Activated CD4-positive, alpha-beta T cell treated with anti-CD3 and anti-CD28 coated beads for 36 hours (primary cell): ENCODE measurements at regions of chr6 and their contacts with region 1.

Region 1: DNA sequence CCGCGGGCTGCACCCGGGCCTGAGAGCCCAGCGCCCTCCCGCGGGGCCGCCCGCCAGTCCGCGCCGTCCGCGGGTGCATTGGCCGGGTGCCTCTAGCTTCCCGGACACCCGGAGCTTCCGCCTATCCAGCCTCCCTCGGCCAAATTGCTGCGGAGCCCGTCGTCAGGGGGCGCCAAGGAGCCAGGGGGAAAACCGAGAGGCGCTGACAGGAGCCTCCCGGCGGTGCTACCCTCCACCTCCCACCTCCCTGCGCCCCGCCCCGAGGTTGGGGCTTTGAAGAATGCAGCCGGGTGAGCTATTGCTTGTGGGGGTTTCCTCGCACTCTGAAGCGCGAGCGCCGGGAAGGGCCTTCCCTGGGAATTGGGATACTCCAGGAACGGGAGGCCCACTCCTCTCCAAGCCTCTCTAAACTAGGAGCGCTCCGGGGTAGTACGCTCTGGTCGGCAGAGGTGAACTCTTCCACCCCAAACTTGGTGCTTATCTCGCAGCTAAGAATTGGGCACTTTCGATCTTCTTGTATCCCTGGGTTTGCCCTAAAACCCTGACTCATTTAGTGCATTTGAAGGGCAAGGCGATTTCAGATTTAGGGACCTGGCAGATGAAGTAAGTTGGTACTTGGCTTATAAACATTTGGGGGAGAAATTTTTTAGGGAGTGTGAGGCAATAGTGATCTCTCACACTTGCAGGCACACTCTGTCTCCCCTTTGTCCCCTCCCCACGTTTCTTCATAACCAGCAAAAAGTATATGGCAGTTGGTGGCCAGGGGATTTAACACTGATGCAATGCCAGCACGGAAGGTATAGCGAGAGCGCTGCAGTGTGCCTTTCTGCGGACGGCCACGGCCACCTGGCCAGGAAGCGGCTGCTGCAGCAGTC is 501 bp downstream of the BEND6 start:
- DNase-seq: peak; percentile 84
- ATAC-seq: peak; percentile 71
- H3K4me3 Mint-ChIP-seq: peak overlapping the region; percentile 59
- H3K27ac Mint-ChIP-seq: no peak overlapping the region
- H3K4me1 Mint-ChIP-seq: peaks cover 20% of the 10 kb centered on the region
- H3K27me3 Mint-ChIP-seq: peaks cover 56% of the 10 kb centered on the region

Region 2: GRCh38 chr6:56279346-56280080 is 675.9 kb before region 1 on chr6:
- CTCF ChIA-PET with region 1: no interaction called
- POLR2A ChIA-PET with region 1: no interaction called
- intact Hi-C with region 1: no loop called
- DNase-seq: no peak
- ATAC-seq: no peak
- H3K4me3 Mint-ChIP-seq: no peak overlapping the region
- H3K27ac Mint-ChIP-seq: no peak overlapping the region
- H3K4me1 Mint-ChIP-seq: no peaks in the 10 kb centered on the region
- H3K27me3 Mint-ChIP-seq: no peaks in the 10 kb centered on the region

Region 3: GRCh38 chr6:56890683-56891429 is 64.6 kb before region 1 on chr6:
- CTCF ChIA-PET with region 1: no interaction called
- POLR2A ChIA-PET with region 1: no interaction called
- intact Hi-C with region 1: loop called in 1 of 2 experiments (anchors 2 kb)
- DNase-seq: peak; percentile 51
- ATAC-seq: peak; percentile 89
- H3K4me3 Mint-ChIP-seq: no peak overlapping the region
- H3K27ac Mint-ChIP-seq: no peak overlapping the region
- H3K4me1 Mint-ChIP-seq: peaks cover 29% of the 10 kb centered on the region
- H3K27me3 Mint-ChIP-seq: no peaks in the 10 kb centered on the region

Region 4: GRCh38 chr6:56922645-56923044 is 32.8 kb before region 1 on chr6:
- CTCF ChIA-PET with region 1: interaction called, 4 read pairs
- POLR2A ChIA-PET with region 1: no interaction called
- intact Hi-C with region 1: loop called in 1 of 2 experiments (anchors 5 kb)
- DNase-seq: no peak
- ATAC-seq: no peak
- H3K4me3 Mint-ChIP-seq: no peak overlapping the region
- H3K27ac Mint-ChIP-seq: no peak overlapping the region
- H3K4me1 Mint-ChIP-seq: no peaks in the 10 kb centered on the region
- H3K27me3 Mint-ChIP-seq: peaks cover 16% of the 10 kb centered on the region

Region 5: GRCh38 chr6:57089687-57090460 is 134.5 kb after region 1 on chr6 and contains the start of gene ZNF451:
- CTCF ChIA-PET with region 1: no interaction called
- POLR2A ChIA-PET with region 1: no interaction called
- intact Hi-C with region 1: loop called (anchors 1 to 5 kb)
- DNase-seq: peak; percentile 98
- ATAC-seq: peak; percentile 95
- H3K4me3 Mint-ChIP-seq: peak within 1 kb of the TSS; percentile 73
- H3K27ac Mint-ChIP-seq: peak within 1 kb of the TSS; percentile 82
- H3K4me1 Mint-ChIP-seq: peaks cover 32% of the 10 kb centered on the region
- H3K27me3 Mint-ChIP-seq: no peaks in the 10 kb centered on the region
- total RNA-seq, gene ZNF451: 46.8 to 60.3 TPM

Region 6: DNA sequence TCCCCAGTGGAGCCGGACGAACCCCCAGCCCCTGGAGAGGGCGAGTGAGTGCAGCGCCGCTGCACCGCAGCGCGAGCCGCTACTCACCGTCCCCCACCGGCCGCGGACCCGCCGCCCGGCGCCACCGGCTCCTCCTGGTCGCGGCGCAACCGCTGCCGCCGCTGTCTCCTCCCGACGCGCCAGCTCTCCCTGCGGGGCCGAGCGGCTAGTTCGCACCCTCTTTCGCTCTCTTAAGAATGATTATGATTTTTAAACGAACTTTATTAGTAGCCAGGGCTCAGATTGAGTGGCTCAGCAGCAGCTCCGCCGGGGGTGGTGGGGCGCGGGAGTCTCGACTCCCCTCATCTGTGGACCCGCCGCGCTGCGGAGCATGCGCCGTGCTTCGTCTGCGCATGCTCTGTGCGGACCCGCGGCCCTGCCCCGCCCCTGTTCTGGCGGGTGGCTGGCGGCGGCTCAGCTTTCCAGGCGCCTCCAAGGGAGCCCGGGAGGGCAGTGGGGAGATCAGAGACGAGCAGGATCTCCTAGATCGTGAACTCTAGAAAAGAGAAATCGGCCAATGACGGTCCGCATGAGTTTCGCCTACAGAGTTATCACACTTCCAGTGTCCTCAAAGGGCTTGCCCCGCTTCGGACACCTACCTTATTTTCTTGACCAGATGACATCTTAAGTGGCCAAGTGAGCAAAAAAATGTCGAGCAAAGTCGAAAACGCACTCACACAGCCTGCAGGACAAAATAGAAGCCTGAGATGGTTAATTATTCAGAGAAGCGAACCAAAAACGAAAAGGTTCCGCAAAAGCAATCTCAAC is 266.7 kb after region 1 on chr6 and contains the start of gene RAB23:
- CTCF ChIA-PET with region 1: interaction called, 3 read pairs
- POLR2A ChIA-PET with region 1: no interaction called
- intact Hi-C with region 1: loop called in 1 of 2 experiments (anchors 5 kb)
- DNase-seq: peak; percentile 88
- ATAC-seq: peak; percentile 93
- H3K4me3 Mint-ChIP-seq: peak within 1 kb of the TSS; percentile 92
- H3K27ac Mint-ChIP-seq: peak within 1 kb of the TSS; percentile 93
- H3K4me1 Mint-ChIP-seq: peaks cover 16% of the 10 kb centered on the region
- H3K27me3 Mint-ChIP-seq: peaks cover 4% of the 10 kb centered on the region
- total RNA-seq, gene RAB23: 1.4 to 1.5 TPM